Adrenal gland (tissue), 19 donors: ENCODE measurements at regions of chr13 and their contacts with region 1.

Region 1: DNA sequence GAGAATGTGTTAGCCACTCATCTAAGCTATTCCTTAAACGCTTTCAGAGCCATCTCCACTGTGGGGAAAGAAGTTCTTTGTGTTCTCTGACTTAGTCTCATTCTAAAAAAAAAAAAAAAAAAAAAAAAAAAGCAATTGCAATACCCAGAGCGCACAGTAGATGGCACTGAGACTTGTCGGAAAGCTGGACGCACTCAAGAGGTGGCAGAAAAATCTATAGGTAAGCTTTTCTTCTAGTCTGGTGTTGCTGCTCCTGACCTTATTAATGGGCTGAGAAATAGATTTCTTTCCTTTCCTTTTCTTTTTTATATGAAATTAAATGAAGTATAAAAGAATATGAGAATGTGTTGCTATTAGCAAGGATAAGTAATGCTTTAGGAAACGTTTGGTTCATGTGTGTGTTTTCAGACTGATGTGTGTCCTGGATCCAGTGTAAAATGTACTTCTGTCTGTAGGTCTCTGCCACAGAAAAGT is 4.7 kb upstream of the GJB2 start:
- DNase-seq: peak in 1 of 7 donors; percentile 36
- H3K4me3 ChIP-seq: no peak overlapping the region
- H3K27ac ChIP-seq: no peak overlapping the region
- H3K4me1 ChIP-seq: peaks cover 13 to 18% of the 10 kb centered on the region in 2 donors
- H3K27me3 ChIP-seq: peaks cover 31% of the 10 kb centered on the region
- CTCF ChIP-seq: peak; percentile 35 to 76 (median 57)
- POLR2A ChIP-seq: no peak

Region 2: DNA sequence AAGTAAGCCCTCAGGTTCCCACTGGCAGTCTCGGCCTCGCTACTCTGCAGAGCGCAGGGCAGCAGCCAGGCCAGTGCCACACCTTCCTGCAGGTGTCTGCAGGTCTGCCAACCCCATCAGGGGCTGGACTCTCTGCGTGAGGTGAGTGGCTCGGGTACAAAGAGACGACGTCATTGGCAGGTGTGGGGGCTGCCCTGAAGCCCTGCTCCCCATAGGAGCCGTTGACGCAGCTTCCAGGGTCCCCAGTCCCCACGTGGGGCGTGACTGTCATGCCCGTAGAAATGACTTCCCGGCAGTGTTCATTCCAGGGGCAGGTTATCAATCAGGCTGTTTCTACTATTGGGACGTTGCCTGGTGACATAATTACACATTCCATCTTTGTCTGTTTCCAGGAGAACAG is 50.0 kb after region 1 on chr13:
- intact Hi-C with region 1: no loop called
- DNase-seq: no peak
- H3K4me3 ChIP-seq: no peak overlapping the region
- H3K27ac ChIP-seq: no peak overlapping the region
- H3K4me1 ChIP-seq: no peaks in the 10 kb centered on the region
- H3K27me3 ChIP-seq: no peaks in the 10 kb centered on the region
- CTCF ChIP-seq: no peak
- POLR2A ChIP-seq: no peak

Region 3: DNA sequence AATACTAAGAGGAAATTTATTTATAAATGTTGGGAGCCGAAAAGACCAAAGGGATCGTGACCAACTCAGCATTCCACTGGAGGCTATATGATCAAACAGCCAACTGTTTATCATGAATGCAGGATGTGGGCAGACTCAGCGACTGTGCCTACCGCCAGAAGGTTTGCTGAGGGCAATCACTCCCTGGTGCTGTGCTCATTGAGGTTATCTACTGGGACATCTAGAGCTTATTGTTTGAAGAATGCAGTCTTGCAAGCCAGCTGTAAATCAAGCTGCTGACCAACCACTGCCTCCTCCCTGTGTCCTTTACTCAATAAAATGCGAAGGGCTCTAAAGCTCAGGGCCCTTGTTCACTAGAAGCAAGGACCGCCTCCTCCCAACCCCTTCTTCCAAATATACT is 713.6 kb after region 1 on chr13:
- intact Hi-C with region 1: loop called in 1 of 2 experiments (anchors 10 kb)
- DNase-seq: peak in 1 of 7 donors; percentile 15
- H3K4me3 ChIP-seq: no peak overlapping the region
- H3K27ac ChIP-seq: no peak overlapping the region
- H3K4me1 ChIP-seq: no peaks in the 10 kb centered on the region
- H3K27me3 ChIP-seq: no peaks in the 10 kb centered on the region
- CTCF ChIP-seq: no peak
- POLR2A ChIP-seq: no peak